GM13977 (cell line): ENCODE measurements at regions of chr1 and their contacts with region 1.

Region 1: DNA sequence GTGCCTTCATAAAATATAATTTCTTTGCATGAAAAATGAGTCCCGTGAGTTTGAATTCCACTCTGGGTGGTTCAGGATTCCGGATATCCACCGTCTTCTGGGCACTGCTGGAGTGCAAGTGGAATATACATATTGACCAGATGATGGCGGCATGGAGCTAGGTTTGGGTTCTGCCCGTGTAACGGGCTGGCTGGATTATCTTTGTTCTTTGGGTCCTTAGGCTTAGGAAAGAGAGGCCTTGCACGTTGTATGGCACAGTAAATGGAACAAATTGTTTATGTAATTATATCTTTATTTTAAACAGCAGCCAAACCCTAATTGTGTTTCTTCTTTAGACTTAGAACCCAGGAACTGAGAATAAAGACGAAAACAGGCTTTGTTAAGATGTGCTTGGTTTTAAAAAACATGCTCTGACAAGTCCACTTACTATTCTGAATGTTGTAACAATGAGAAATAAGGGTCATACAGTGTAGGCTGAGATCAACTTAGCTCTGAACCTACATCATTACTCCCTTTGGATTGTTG is 13.5 kb upstream of the ACBD6 start:
- DNase-seq: peak; percentile 78
- CTCF ChIP-seq: peak; percentile 87

Region 2: GRCh38 chr1:180229974-180230790 is 285.7 kb before region 1 on chr1 and contains the start of gene LHX4:
- in situ Hi-C with region 1: no loop called
- DNase-seq: peak; percentile 70
- CTCF ChIP-seq: no peak

Region 3: DNA sequence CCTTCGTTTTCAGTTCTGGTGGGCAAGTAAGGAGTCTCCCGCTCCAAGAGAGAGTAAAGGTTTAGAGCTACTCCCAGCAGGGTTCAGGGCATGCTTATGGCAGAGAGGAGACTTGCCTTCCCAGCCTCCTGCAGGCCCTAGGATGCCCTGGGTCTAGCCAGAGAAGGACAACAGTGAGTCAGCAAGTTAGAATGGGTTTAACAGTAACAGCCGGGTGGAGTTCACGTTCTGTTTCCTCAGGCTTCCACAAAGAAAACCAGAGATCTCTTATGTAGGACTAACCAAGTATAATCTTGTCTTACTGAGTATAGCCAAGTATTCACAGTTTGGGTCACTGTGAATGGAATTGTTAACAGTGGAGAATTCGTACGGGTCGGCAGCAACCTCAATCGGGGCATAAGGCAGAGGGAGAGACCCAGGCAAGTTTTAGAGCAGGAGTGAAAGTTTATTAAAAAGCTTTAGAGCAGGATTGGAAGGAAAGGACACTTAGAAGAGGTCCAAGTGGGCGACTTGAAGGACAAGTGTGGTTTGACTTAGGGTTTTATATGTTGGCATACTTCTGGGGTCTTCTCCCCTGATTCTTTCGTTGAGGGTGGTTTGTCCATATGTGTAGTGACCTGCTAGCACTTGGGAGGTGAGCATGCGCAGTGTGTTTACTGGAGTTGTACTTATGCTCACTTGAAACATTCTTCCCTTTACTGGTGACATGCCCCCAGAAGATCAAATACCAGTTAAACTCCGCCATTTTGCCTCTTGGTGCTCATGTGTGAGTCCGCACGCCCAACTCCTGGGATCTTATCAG is 47.3 kb after region 1 on chr1:
- in situ Hi-C with region 1: no loop called
- DNase-seq: no peak
- CTCF ChIP-seq: no peak

Region 4: GRCh38 chr1:180691301-180691913 is 175.5 kb after region 1 on chr1:
- in situ Hi-C with region 1: no loop called
- DNase-seq: no peak
- CTCF ChIP-seq: no peak

Region 5: GRCh38 chr1:180851995-180852887 is 336.3 kb after region 1 on chr1:
- in situ Hi-C with region 1: loop called (anchors 10 kb)
- DNase-seq: no peak
- CTCF ChIP-seq: no peak